PC-3 (cell line): ENCODE measurements at regions of chr20 and their contacts with region 1.

Region 1: DNA sequence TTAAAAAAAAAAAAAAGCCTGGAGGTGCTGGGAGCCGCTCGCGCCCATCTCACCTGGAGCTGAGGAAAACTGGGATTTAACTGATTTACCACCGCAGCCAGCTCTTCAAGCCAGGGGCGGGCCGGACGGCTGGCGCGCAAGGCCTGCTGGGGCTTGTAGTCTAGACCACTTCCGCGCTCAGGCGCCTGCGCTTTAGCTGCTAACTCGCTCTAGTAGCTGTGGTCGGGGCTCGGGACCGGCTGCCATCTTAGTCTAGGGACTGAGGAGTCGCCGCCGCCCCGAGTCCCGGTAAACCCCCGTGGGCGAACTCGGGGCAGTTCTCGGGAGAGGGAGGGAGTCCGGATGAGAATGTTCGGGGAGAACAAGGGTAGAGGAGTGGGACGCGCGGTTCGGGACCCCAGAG is at the start of gene ITCH:
- DNase-seq: peak; percentile 97
- ATAC-seq: peak; percentile 98
- H3K4me3 ChIP-seq: peak within 1 kb of the TSS; percentile 85
- H3K27ac ChIP-seq: peak within 1 kb of the TSS; percentile 68
- H3K4me1 ChIP-seq: peaks cover 32% of the 10 kb centered on the region
- H3K27me3 ChIP-seq: no peaks in the 10 kb centered on the region
- CTCF ChIP-seq: no peak
- total RNA-seq, gene ITCH: 49.4 and 54.8 TPM in 2 replicates

Region 2: DNA sequence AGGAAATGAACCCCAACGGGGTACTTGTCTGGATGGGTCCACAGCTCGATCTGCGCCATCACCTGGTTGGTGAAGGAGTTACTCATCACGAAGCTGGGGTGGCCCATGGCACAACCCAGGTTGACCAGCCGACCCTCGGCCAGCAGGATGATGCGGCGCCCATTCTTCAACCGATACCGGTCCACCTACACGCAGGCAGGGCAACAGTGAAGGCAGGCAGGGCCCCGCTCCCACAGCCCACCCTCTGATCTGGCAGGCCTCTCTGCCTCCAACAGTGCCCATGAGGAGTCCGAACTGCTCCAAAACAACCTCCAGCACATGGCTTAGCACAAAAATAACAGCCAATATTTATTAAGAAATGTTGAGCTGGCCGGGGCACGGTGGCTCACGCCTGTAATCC is 77.6 kb before region 1 on chr20:
- CTCF ChIA-PET with region 1: no interaction called
- POLR2A ChIA-PET with region 1: no interaction called
- intact Hi-C with region 1: no loop called
- DNase-seq: no peak
- ATAC-seq: no peak
- H3K4me3 ChIP-seq: no peak overlapping the region
- H3K27ac ChIP-seq: no peak overlapping the region
- H3K4me1 ChIP-seq: no peaks in the 10 kb centered on the region
- H3K27me3 ChIP-seq: no peaks in the 10 kb centered on the region
- CTCF ChIP-seq: no peak

Region 3: GRCh38 chr20:34334654-34335407 is 28.2 kb before region 1 on chr20:
- CTCF ChIA-PET with region 1: interaction called, 3 read pairs
- POLR2A ChIA-PET with region 1: interaction called, 15 read pairs
- intact Hi-C with region 1: no loop called
- DNase-seq: peak; percentile 86
- ATAC-seq: peak; percentile 86
- H3K4me3 ChIP-seq: 0 out of 2 replicates have a peak overlapping the region, but pooled peaks have one; percentile 2
- H3K27ac ChIP-seq: peak overlapping the region; percentile 97
- H3K4me1 ChIP-seq: peaks cover 25% of the 10 kb centered on the region
- H3K27me3 ChIP-seq: no peaks in the 10 kb centered on the region
- CTCF ChIP-seq: no peak

Region 4: GRCh38 chr20:34375977-34376430 is 12.9 kb after region 1 on chr20:
- CTCF ChIA-PET with region 1: no interaction called
- POLR2A ChIA-PET with region 1: no interaction called
- intact Hi-C with region 1: no loop called
- DNase-seq: no peak
- ATAC-seq: peak; percentile 40
- H3K4me3 ChIP-seq: no peak overlapping the region
- H3K27ac ChIP-seq: peak overlapping the region; percentile 26; the same call in 1 of the 2 replicates
- H3K4me1 ChIP-seq: no peaks in the 10 kb centered on the region; the same call in 1 of the 2 replicates
- H3K27me3 ChIP-seq: no peaks in the 10 kb centered on the region
- CTCF ChIP-seq: no peak

Region 5: DNA sequence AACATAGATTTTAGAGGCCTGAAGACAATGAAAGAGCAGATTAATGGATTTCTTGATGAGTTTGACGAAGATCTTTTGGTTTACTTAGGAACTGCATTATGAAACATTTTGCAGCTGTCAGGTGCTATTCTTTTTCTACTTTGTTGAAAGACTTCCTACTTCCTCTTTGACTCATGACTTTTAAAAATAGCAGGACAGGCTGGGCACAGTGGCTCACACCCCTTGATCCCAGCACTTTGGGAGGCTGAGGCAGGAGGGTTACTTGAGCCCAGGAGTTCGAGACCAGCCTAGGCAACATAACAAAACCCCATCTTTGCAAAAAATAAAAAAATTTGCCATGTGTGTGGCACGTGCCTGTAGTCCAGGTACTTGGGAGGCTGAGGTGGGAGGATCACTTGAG is 52.0 kb after region 1 on chr20:
- CTCF ChIA-PET with region 1: interaction called, 10 read pairs
- POLR2A ChIA-PET with region 1: no interaction called
- intact Hi-C with region 1: loop called (anchors 10 kb)
- DNase-seq: no peak
- ATAC-seq: no peak
- H3K4me3 ChIP-seq: no peak overlapping the region
- H3K27ac ChIP-seq: no peak overlapping the region
- H3K4me1 ChIP-seq: peaks cover 18% of the 10 kb centered on the region
- H3K27me3 ChIP-seq: no peaks in the 10 kb centered on the region
- CTCF ChIP-seq: no peak

Region 6: DNA sequence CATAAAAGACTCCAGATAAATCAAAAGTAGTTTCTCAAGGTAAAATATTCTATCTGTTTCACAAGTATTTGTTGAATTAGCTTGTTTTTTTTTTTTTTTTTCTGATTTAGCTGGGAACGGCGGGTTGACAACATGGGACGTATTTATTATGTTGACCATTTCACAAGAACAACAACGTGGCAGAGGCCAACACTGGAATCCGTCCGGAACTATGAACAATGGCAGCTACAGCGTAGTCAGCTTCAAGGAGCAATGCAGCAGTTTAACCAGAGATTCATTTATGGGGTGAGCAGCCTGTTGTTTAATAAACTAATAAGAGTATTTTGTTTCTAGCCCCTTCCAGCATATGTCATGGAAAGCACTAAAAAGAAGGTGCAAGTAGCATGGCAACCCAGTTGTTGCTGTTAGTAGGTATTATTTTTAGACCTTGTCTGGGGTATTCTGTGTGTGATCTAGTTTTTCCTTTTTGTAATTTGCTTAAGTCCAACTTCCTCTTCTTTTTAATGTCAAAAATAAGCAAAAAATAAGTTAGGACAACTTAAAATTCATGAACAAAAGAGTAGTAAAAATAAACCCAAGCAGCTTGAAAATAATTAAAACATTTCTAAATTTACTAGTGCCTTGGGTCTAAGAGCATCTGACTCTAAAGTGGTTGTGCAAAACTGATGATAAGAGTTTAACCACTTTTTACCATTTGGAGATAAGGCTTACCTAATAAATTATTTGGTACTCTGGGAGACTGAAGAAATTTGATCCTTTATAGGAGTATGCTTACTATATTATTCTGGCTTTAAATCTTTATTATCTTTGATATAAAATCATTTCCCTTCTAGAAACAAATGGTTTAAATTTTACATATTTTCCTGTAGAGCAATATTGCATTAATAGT is 82.4 kb after region 1 on chr20:
- CTCF ChIA-PET with region 1: no interaction called
- POLR2A ChIA-PET with region 1: interaction called, 12 read pairs
- intact Hi-C with region 1: no loop called
- DNase-seq: no peak
- ATAC-seq: no peak
- H3K4me3 ChIP-seq: no peak overlapping the region
- H3K27ac ChIP-seq: no peak overlapping the region
- H3K4me1 ChIP-seq: no peaks in the 10 kb centered on the region
- H3K27me3 ChIP-seq: no peaks in the 10 kb centered on the region
- CTCF ChIP-seq: no peak